Activated CD8-positive, alpha-beta T cell treated with anti-CD3 and anti-CD28 coated beads for 36 hours (primary cell): ENCODE measurements at regions of chr11 and their contacts with region 1.

Region 1: GRCh38 chr11:108733479-108734116 is 68.7 kb downstream of the DDX10 start:
- DNase-seq: peak; percentile 68
- ATAC-seq: peak; percentile 97
- H3K4me3 Mint-ChIP-seq: peak overlapping the region; percentile 24
- H3K27ac Mint-ChIP-seq: peak overlapping the region; percentile 86
- H3K4me1 Mint-ChIP-seq: peaks cover 46% of the 10 kb centered on the region
- H3K27me3 Mint-ChIP-seq: no peaks in the 10 kb centered on the region
- CTCF ChIP-seq: no peak

Region 2: GRCh38 chr11:108697872-108698473 is 35.6 kb before region 1 on chr11:
- CTCF ChIA-PET with region 1: interaction called, 18 read pairs
- POLR2A ChIA-PET with region 1: no interaction called
- intact Hi-C with region 1: no loop called
- DNase-seq: peak; percentile 67
- ATAC-seq: peak; percentile 81
- H3K4me3 Mint-ChIP-seq: no peak overlapping the region
- H3K27ac Mint-ChIP-seq: no peak overlapping the region
- H3K4me1 Mint-ChIP-seq: peaks cover 7% of the 10 kb centered on the region
- H3K27me3 Mint-ChIP-seq: no peaks in the 10 kb centered on the region
- CTCF ChIP-seq: peak; percentile 75

Region 3: GRCh38 chr11:108743851-108744250 is 10.3 kb after region 1 on chr11:
- CTCF ChIA-PET with region 1: interaction called, 28 read pairs
- POLR2A ChIA-PET with region 1: no interaction called
- intact Hi-C with region 1: no loop called
- DNase-seq: no peak
- ATAC-seq: no peak
- H3K4me3 Mint-ChIP-seq: no peak overlapping the region
- H3K27ac Mint-ChIP-seq: no peak overlapping the region
- H3K4me1 Mint-ChIP-seq: peaks cover 9% of the 10 kb centered on the region
- H3K27me3 Mint-ChIP-seq: no peaks in the 10 kb centered on the region
- CTCF ChIP-seq: no peak

Region 4: DNA sequence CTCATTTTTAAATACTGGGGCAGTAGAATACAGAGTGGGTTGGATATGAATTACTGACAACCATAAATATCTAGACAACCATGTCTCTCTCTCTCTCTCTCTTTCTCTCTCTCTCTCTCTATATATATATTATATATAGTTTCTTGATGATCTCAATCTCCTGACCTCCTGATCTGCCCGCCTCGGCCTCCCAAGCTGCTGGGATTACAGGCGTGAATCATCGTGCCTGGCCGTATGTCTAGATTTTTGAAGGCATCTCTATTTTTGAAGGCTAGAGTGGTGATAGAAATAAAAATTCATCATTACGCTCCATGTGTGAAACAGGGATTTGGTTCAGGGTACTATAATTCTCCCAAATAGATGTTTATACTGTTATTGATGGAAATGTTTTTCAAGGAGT is 15.4 kb after region 1 on chr11:
- CTCF ChIA-PET with region 1: interaction called, 28 read pairs
- POLR2A ChIA-PET with region 1: no interaction called
- intact Hi-C with region 1: no loop called
- DNase-seq: no peak
- ATAC-seq: no peak
- H3K4me3 Mint-ChIP-seq: no peak overlapping the region
- H3K27ac Mint-ChIP-seq: no peak overlapping the region
- H3K4me1 Mint-ChIP-seq: peaks cover 22% of the 10 kb centered on the region
- H3K27me3 Mint-ChIP-seq: no peaks in the 10 kb centered on the region
- CTCF ChIP-seq: no peak

Region 5: GRCh38 chr11:108775324-108775723 is 41.7 kb after region 1 on chr11:
- CTCF ChIA-PET with region 1: no interaction called
- POLR2A ChIA-PET with region 1: no interaction called
- intact Hi-C with region 1: no loop called
- DNase-seq: no peak
- ATAC-seq: no peak
- H3K4me3 Mint-ChIP-seq: no peak overlapping the region
- H3K27ac Mint-ChIP-seq: no peak overlapping the region
- H3K4me1 Mint-ChIP-seq: peaks cover 5% of the 10 kb centered on the region
- H3K27me3 Mint-ChIP-seq: no peaks in the 10 kb centered on the region
- CTCF ChIP-seq: no peak

Region 6: DNA sequence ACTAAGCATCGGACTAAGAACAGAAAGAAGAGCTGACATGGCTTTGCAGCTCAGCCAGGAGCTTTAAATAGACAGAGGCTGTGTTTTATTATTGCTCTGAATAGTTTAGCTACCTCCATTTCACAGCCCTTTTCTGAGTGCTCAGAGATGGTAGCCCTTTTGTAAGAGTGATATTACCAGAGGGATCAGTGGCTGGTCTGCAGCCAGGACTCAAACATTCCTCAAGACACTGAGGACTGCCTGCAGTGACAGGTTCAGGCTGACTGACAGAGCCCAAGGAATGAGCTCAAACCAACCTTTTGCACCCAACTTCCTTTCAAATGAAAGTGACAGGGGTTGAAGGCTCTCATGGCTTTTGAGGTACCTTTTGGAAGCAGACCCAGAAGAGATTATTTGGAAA is 120.3 kb after region 1 on chr11:
- CTCF ChIA-PET with region 1: interaction called, 5 read pairs
- POLR2A ChIA-PET with region 1: no interaction called
- intact Hi-C with region 1: loop called (anchors 10 kb)
- DNase-seq: peak; percentile 2
- ATAC-seq: peak; percentile 48
- H3K4me3 Mint-ChIP-seq: peak overlapping the region; percentile 71
- H3K27ac Mint-ChIP-seq: peak overlapping the region; percentile 93
- H3K4me1 Mint-ChIP-seq: peaks cover 28% of the 10 kb centered on the region
- H3K27me3 Mint-ChIP-seq: no peaks in the 10 kb centered on the region
- CTCF ChIP-seq: no peak